ENCODE measurements at regions of chr19 and their contacts with region 1.

Region 1: DNA sequence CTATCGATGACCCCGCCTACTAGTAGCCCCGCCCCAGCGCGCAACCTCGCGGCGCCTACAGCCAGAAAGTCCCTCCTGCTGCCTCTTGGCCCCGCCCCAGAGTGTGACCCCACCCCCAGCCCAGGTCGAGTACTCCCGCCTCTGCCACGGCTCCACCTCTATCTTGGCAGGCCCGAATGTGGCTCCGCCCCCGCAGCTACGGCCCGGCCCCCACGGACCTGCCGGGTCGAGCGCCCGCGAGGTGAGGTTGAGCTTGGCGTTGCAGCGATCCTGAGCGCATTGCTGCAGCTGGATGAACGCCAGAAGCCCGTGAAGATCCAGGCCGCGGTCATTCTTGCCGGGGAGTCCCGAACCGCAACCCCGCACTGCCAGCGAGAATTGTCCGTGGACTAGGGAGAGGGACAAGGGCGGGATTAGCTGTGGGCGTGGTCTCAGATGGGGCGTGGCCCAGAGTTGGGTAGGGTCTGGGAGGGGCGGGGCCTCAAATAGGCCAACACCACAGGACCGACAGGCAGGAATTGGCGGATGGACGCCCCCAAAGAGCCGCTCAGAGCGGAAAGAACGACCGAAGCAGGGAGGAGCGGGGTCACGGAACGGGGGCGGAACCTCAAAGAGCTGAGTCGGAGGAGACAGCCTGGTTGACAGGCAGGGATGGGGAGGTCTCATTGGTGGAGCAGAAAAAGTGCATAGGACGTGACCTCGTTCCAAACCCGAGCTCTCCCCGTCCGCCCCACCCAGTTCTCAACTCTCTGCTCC is 1.8 kb downstream of the LYPD3 start:
- DNase-seq: peak; percentile 98 to 100 (median 100)
- ATAC-seq: peak; percentile 80 to 81
- H3K4me3 Mint-ChIP-seq: peak overlapping the region; percentile 81 to 98 (median 94)
- H3K27ac Mint-ChIP-seq: peak overlapping the region; percentile 95 to 100 (median 99)
- H3K4me1 Mint-ChIP-seq: peaks cover 36 to 64% (median 55%) of the 10 kb centered on the region in 4 donors
- H3K27me3 Mint-ChIP-seq: no peaks in the 10 kb centered on the region

Region 2: DNA sequence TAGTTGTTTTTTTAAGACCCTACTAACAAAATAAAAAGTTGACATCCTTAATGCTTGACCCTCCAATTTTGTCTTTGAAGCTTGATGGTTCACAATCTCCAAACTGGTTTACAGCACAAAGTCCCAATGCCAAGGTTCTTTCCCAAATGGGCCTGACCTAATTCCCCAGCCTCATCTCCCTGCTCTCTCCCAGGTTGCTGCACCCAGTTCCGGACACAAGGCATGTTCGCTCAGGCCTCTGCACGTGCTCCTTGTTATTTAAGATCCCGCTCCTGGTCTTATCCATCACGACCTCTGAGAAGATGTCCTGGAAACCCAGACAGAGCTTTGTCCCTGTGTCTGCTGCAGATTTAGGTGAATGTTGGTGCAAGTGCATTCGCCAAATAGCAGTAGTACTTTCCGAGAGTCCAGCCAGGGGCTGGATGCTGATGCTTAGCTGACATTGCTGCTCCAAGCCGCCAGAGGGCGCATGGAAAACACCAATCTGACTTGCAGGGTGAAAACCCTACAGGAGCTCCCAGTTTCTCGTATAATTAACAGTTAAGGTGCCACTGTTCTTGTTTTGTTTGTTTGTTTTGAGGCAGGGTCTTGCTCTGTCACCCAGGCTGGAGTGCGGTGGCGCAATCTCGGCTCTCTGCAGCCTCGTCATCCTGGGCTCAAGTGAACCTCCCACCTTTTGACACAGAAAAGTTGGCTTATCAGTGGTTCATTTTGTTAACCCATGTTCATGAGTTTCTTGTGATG is 16.6 kb before region 1 on chr19:
- POLR2A ChIA-PET with region 1: interaction called, 51 read pairs
- DNase-seq: peak; percentile 69 to 89 (median 78)
- ATAC-seq: peak; percentile 84 to 95
- H3K4me3 Mint-ChIP-seq: no peak overlapping the region
- H3K27ac Mint-ChIP-seq: peak overlapping the region; percentile 13 to 90 (median 80)
- H3K4me1 Mint-ChIP-seq: peaks cover 12 to 37% (median 21%) of the 10 kb centered on the region in 4 donors
- H3K27me3 Mint-ChIP-seq: no peaks in the 10 kb centered on the region

Region 3: DNA sequence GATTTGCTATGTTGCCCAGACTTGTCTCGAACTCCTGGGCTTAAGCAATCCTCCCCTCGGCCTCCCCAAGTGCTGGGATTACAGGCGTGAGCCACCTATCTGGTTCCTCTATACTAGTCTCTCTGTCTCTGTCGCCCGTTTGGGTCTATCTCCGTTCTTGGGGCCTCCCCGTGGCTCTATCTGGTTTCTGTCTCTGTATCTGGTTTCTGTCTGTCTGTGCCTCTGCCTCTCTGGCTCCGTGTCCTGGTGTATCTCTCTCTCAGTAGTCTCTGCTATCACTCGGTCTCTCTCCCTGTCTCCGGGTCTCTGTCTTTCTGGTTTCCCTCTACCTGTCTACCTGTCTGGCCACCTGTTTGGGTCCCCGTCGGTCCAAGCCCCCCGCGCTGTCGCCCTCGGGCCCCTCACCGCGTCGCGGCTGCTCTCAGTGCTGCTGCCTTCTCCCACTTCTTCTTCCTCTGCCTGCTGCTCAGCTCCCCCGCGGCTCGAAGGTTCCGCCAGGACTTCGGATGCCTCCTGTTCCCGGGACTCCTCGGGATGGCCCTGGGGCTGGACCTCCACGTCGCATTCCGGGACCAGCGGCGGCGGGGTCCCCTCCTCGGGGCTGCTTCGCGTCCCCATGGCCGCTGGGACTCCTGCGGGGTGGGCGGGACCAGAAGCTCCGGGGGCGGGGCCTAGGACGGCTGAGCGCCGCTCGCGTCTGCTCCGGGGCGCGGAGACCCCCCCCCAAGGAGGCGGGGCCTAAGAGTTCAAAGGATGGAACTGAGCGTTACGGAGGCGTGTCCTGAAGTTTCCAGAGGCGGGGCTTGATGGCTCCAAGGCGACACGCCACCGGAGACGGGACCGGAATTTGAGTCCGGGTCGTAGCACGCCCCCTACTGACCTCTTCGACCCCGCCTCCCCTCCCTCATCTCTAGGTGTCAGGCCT is 40.2 kb after region 1 on chr19:
- POLR2A ChIA-PET with region 1: interaction called, 70 read pairs
- DNase-seq: peak; percentile 95 to 100 (median 98)
- ATAC-seq: peak; percentile 89 to 91
- H3K4me3 Mint-ChIP-seq: peak overlapping the region; percentile 86 to 99 (median 96)
- H3K27ac Mint-ChIP-seq: peak overlapping the region; percentile 84 to 99 (median 97)
- H3K4me1 Mint-ChIP-seq: peaks cover 18 to 44% (median 34%) of the 10 kb centered on the region in 4 donors
- H3K27me3 Mint-ChIP-seq: no peaks in the 10 kb centered on the region

Region 4: DNA sequence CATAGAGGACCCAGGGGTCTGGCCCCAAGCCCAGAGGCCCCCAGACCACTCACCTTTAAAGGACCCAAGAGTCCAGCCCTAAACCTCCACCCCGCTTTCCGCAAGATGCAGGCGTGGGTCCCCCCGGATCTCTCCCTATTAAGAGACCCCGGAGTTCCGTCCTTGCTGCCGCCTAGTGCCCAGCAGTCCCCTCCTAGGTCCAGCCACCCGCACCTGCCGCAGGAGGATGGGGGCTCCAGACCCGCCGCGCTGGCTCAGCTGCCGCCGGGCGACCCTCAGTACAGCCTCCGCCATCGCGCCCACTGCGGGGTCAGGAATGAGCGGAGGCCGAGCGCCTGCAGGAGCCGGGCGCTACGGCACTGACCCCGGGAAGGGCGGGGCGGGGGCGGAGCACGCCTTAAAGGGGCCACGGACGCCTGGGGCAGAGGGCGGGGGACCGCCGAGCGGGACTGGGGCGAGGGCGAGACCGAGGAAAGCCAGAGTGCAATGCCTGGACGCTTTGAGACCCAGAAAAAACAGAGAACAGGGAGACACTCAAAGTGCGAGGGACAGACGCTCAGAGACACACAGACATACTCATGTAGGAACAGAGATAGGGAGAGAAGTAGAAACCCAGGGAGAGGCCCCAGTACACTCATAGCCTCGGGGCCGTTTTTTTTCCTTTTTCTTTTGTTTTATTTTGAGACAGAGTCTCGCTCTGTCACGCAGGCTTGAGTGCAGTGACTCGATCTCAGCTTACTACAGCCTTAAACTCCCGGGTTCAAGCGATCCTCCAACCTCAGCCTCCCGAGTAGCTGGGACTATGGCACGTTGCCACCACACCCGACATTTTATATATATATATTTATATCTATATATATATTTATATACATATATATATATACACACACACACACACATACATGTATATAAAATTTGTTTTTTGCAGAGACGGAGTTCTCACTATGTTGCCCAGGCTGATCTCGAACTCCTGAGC is 63.6 kb after region 1 on chr19 and contains the start of gene ETHE1:
- POLR2A ChIA-PET with region 1: interaction called, 24 read pairs
- DNase-seq: peak; percentile 35 to 75 (median 61)
- ATAC-seq: peak; percentile 72 to 87
- H3K4me3 Mint-ChIP-seq: peak within 1 kb of the TSS; percentile 73 to 94 (median 79)
- H3K27ac Mint-ChIP-seq: peak within 1 kb of the TSS; percentile 75 to 97 (median 90)
- H3K4me1 Mint-ChIP-seq: peaks cover 10 to 38% (median 28%) of the 10 kb centered on the region in 4 donors
- H3K27me3 Mint-ChIP-seq: no peaks in the 10 kb centered on the region
- polyA plus RNA-seq, gene ETHE1: 62.0 to 78.7 (median 64.5) TPM